ENCODE measurements at regions of chr11 and their contacts with region 1.

Region 1: GRCh38 chr11:11265994-11266606 is 87.0 kb downstream of the CSNK2A3 start:
- DNase-seq: peak in 4 of 10 donors; percentile 47 to 61 (median 54)
- H3K4me3 ChIP-seq: no peak overlapping the region
- H3K27ac ChIP-seq: no peak overlapping the region
- H3K27me3 ChIP-seq: no peaks in the 10 kb centered on the region
- CTCF ChIP-seq: peak; percentile 36 to 83 (median 74)

Region 2: DNA sequence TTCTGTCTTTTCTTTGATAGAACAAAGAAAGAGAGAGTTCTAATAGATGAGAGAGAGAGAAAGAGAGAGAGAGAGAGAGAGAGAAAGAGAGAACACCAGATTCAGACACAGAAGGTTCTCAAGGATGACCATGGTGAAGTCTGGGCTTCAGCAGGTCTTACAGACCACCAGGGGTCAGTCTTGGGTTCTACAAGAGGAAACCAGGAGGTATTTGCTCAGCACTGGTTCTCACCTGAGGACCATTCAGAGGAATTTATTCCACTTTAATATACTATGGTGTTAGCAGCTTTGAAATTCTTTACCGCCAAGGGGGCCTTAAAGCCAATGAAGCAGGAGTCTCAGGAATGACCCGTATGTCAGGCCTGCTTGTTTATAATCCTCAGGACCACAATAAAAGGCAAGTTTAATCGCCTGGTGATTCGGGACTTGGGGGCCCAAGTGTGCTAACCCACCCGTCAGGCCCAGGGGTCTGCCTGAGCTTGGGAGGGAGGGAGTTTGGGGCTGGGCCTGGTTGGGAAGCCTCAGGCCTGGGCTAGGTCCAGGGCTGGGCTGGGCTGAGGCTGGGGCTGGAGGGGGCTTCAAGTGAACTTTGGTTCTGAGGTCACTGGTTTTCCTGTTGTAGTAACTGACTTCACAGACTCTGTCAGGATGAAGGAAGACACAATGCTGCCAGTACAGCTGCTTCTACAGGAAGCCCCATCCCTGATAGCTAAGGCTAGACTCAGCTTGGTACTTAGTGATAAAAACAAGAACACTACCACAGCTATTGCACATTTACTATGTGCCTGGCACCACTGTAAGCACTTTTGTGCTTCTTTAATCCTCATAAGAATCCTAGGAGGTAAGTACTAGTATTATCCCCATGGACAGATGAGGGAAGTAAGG is 229.0 kb before region 1 on chr11:
- intact Hi-C with region 1: loop called (anchors 5 kb)
- DNase-seq: peak in 3 of 10 donors; percentile 46 to 65 (median 51)
- H3K4me3 ChIP-seq: no peak overlapping the region
- H3K27ac ChIP-seq: peak overlapping the region in 37 of 59 donors; percentile 0 to 79 (median 65)
- H3K27me3 ChIP-seq: no peaks in the 10 kb centered on the region
- CTCF ChIP-seq: peak; percentile 47 to 87 (median 74)

Measured in dorsolateral prefrontal cortex (tissue), 120 donors.